ENCODE measurements at regions of chr20 and their contacts with region 1.

Region 1: GRCh38 chr20:7285918-7286556 is 518.6 kb downstream of the BMP2 start:
- DNase-seq: peak; percentile 65
- H3K27ac ChIP-seq: no peak overlapping the region
- CTCF ChIP-seq: peak; percentile 94

Region 2: DNA sequence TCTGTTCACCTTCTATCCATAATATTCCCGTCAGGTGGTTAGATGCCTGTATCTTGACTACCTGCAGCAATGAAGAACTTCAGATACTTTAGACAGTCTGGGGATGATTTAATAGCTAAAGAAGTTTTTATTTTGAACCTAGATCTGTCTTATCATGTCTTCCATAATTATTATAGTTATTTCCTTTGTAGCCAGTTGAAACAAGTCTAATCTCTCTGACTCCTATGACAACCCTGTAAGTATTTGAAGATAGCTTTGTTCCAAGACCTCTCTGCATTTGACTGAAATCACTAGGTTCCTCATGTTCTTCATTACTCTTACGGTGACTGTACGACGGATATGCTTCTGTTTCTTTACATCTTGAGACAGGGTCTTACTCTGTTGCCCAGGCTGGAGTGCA is 835.2 kb before region 1 on chr20:
- CTCF ChIA-PET with region 1: interaction called, 11 read pairs
- POLR2A ChIA-PET with region 1: no interaction called
- DNase-seq: no peak
- H3K27ac ChIP-seq: no peak overlapping the region
- CTCF ChIP-seq: no peak

Region 3: GRCh38 chr20:6966721-6967120 is 319.3 kb before region 1 on chr20:
- CTCF ChIA-PET with region 1: no interaction called
- POLR2A ChIA-PET with region 1: no interaction called
- DNase-seq: peak; percentile 30
- H3K27ac ChIP-seq: no peak overlapping the region
- CTCF ChIP-seq: no peak

Measured in RWPE1 (cell line).